Heart left ventricle (tissue), 16 donors: ENCODE measurements at regions of chr10 and their contacts with region 1.

Region 1: DNA sequence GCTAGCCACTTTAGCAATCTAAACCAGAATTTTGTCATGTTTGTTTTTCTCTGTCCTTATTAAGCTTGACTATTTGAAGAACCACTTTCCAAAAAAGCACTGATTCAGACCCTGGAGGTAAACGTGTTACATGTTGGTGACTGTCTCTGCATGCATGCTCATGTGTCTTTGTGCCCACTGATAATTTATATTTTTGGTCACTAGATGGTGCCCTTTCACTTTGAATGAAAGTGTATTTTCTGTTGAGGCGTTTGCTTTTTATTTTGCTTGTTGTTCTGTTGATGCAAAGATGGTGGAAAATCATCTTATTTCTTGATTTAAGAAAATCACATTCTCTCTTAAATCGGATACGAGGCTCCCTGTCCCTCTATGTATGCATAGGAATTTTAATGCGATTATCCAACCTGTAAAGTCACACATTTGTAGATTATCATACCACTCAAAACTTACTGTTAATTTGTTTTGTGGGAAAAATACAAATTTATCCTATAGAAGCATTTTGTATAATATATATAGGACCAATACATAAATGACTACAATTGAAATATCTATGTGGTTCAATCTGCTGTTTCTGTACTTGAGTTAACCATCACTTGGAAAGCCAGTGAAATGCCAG is 269.3 kb downstream of the BICC1 start:
- DNase-seq: no peak
- ATAC-seq: peak in 2 of 4 donors; percentile 51 to 58
- H3K4me3 ChIP-seq: no peak overlapping the region
- H3K27ac ChIP-seq: peak overlapping the region in 8 of 12 donors; percentile 5 to 61 (median 40)
- H3K4me1 ChIP-seq: peaks cover 0 to 46% (median 9%) of the 10 kb centered on the region in 12 donors
- H3K27me3 ChIP-seq: no peaks in the 10 kb centered on the region
- CTCF ChIP-seq: peak; percentile 39 to 72 (median 61)
- POLR2A ChIP-seq: no peak

Region 2: GRCh38 chr10:57799625-57800024 is 982.4 kb before region 1 on chr10:
- intact Hi-C with region 1: no loop called
- DNase-seq: no peak
- ATAC-seq: no peak
- H3K4me3 ChIP-seq: no peak overlapping the region
- H3K27ac ChIP-seq: no peak overlapping the region
- H3K4me1 ChIP-seq: no peaks in the 10 kb centered on the region
- H3K27me3 ChIP-seq: no peaks in the 10 kb centered on the region
- CTCF ChIP-seq: no peak
- POLR2A ChIP-seq: no peak

Region 3: GRCh38 chr10:58414270-58415041 is 367.5 kb before region 1 on chr10:
- intact Hi-C with region 1: loop called in 1 of 10 experiments (anchors 10 kb)
- DNase-seq: no peak
- ATAC-seq: peak; percentile 61 to 77 (median 70)
- H3K4me3 ChIP-seq: no peak overlapping the region
- H3K27ac ChIP-seq: peak overlapping the region in 5 of 12 donors; percentile 6 to 56 (median 38)
- H3K4me1 ChIP-seq: peaks cover 0 to 7% (median 0%) of the 10 kb centered on the region in 12 donors
- H3K27me3 ChIP-seq: peaks cover 0 to 3% (median 0%) of the 10 kb centered on the region in 9 donors
- CTCF ChIP-seq: peak in 9 of 12 donors; percentile 14 to 49 (median 38)
- POLR2A ChIP-seq: no peak

Region 4: GRCh38 chr10:58796242-58796641 is 14.3 kb after region 1 on chr10:
- intact Hi-C with region 1: no loop called
- DNase-seq: no peak
- ATAC-seq: no peak
- H3K4me3 ChIP-seq: no peak overlapping the region
- H3K27ac ChIP-seq: no peak overlapping the region
- H3K4me1 ChIP-seq: peaks cover 0 to 15% (median 0%) of the 10 kb centered on the region in 12 donors
- H3K27me3 ChIP-seq: no peaks in the 10 kb centered on the region
- CTCF ChIP-seq: no peak
- POLR2A ChIP-seq: no peak

Region 5: DNA sequence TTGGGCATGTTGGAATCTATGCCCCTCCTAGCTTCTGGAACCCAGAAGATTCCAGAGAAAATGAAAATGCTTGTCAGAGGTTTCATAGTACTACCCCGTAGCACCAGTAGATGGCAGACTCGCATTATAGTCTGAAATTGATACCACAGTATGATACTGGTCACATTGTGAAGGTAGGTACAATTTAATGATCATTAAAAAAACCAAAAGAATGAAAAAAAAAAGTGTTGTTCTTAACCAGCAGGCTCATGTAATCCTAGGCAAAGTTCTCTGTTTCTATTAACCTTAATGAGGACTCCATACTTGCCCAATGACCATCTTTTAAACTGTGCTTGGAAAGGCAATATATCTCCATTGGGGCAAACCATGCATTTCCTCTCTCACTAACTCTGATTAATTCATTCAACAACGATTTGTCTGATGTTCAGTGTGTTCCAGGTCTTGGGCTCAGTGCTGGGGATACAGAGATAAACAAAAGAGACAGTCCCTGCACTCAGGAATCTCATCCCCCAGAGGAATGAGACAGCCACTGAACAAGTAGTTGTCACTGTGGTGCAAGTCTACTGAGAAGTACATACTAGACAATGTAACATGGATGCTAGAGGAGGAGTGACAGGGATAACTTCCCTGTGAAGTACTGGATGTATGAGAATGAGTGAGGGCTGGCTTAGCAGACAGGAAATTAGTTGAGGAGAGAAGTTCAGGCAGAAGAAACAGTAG is 170.9 kb after region 1 on chr10:
- intact Hi-C with region 1: loop called in 7 of 10 experiments (anchors 2 to 10 kb)
- DNase-seq: peak in 2 of 5 donors; percentile 23 to 36
- ATAC-seq: peak; percentile 38 to 76 (median 70)
- H3K4me3 ChIP-seq: peak overlapping the region in 1 of 12 donors; percentile 11
- H3K27ac ChIP-seq: peak overlapping the region in 7 of 12 donors; percentile 32 to 88 (median 71)
- H3K4me1 ChIP-seq: peaks cover 0 to 13% (median 0%) of the 10 kb centered on the region in 12 donors
- H3K27me3 ChIP-seq: no peaks in the 10 kb centered on the region
- CTCF ChIP-seq: peak; percentile 61 to 86 (median 78)
- POLR2A ChIP-seq: no peak

Region 6: GRCh38 chr10:59181668-59182067 is 399.7 kb after region 1 on chr10:
- intact Hi-C with region 1: loop called in 6 of 10 experiments (anchors 2 to 5 kb)
- DNase-seq: peak in 1 of 5 donors; percentile 5
- ATAC-seq: peak in 2 of 4 donors; percentile 71 to 73
- H3K4me3 ChIP-seq: no peak overlapping the region
- H3K27ac ChIP-seq: no peak overlapping the region
- H3K4me1 ChIP-seq: peaks cover 0 to 8% (median 3%) of the 10 kb centered on the region in 12 donors
- H3K27me3 ChIP-seq: peaks cover 3 to 37% (median 9%) of the 10 kb centered on the region in 9 donors
- CTCF ChIP-seq: peak; percentile 20 to 72 (median 54)
- POLR2A ChIP-seq: no peak